Activated CD4-positive, alpha-beta memory T cell treated with anti-CD3 and anti-CD28 coated beads, Interleukin-2, amount 10 ng/mL, durations not matched to agents 7 days and 5 days (primary cell): ENCODE measurements at regions of chr20 and their contacts with region 1.

Region 1: DNA sequence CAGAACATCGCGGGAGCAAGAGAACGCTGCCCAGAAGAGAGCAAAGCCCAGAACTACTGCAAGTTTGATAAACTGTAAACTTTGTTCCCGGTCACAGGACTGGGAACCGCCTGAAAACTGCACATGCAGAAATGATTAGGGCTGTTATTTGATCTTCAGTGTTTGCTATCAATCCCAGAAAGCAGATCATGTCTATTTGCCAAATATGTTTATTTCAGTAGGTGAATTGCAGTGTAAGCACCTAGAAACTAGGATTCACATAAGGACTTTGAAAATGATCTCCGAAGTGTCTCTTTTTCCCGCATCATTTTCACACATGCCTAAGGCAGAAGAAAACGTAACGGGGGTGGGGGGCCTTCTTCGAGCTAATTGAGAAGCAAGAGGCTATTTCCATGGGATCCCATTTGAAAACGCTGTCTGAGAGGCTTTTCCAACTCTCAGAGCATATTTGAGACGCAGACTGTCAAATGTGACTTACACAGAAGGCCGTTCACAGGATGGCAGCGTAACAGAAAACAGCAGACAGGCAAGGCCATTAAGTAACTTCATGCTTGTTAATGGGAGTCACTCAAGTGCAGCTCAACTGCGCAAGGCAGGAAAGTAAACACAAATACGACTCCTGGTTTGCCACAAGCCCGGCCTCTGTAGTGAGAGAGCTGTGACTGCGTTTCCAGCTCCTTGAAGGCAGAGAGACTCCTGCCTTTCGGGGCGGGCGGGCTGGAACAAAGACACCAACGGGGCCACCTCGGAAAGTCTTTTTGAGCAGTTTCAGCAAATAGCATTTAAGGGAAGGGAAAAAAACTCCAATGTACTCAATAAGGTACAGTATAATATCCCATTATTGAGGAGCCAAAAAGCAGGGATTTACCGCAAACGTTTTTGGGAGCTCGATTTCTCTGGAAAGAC is 144.7 kb upstream of the ZNF217 start:
- DNase-seq: no peak
- H3K4me3 Mint-ChIP-seq: no peak overlapping the region
- H3K27ac Mint-ChIP-seq: no peak overlapping the region
- H3K4me1 Mint-ChIP-seq: peaks cover 46% of the 10 kb centered on the region
- H3K27me3 Mint-ChIP-seq: peaks cover 2% of the 10 kb centered on the region

Region 2: GRCh38 chr20:53713321-53714056 is 24.8 kb before region 1 on chr20:
- CTCF ChIA-PET with region 1: no interaction called
- POLR2A ChIA-PET with region 1: no interaction called
- DNase-seq: no peak
- H3K4me3 Mint-ChIP-seq: no peak overlapping the region
- H3K27ac Mint-ChIP-seq: no peak overlapping the region
- H3K4me1 Mint-ChIP-seq: peaks cover 20% of the 10 kb centered on the region
- H3K27me3 Mint-ChIP-seq: no peaks in the 10 kb centered on the region

Region 3: GRCh38 chr20:53750827-53751619 is 12.7 kb after region 1 on chr20:
- CTCF ChIA-PET with region 1: interaction called, 6 read pairs
- POLR2A ChIA-PET with region 1: interaction called, 15 read pairs
- DNase-seq: peak; percentile 56
- H3K4me3 Mint-ChIP-seq: peak overlapping the region; percentile 16
- H3K27ac Mint-ChIP-seq: peak overlapping the region; percentile 96
- H3K4me1 Mint-ChIP-seq: peaks cover 69% of the 10 kb centered on the region
- H3K27me3 Mint-ChIP-seq: no peaks in the 10 kb centered on the region

Region 4: GRCh38 chr20:53899351-53900167 is 161.3 kb after region 1 on chr20:
- CTCF ChIA-PET with region 1: no interaction called
- POLR2A ChIA-PET with region 1: no interaction called
- DNase-seq: peak; percentile 87
- H3K4me3 Mint-ChIP-seq: no peak overlapping the region
- H3K27ac Mint-ChIP-seq: peak overlapping the region; percentile 78
- H3K4me1 Mint-ChIP-seq: peaks cover 54% of the 10 kb centered on the region
- H3K27me3 Mint-ChIP-seq: no peaks in the 10 kb centered on the region